ENCODE measurements at regions of chr7 and their contacts with region 1.

Region 1: GRCh38 chr7:104137971-104138370 is 69.8 kb downstream of the ORC5 start:
- DNase-seq: no peak
- H3K4me3 Mint-ChIP-seq: no peak overlapping the region
- H3K27ac Mint-ChIP-seq: no peak overlapping the region
- H3K4me1 Mint-ChIP-seq: peaks cover 9% of the 10 kb centered on the region
- H3K27me3 Mint-ChIP-seq: no peaks in the 10 kb centered on the region

Region 2: DNA sequence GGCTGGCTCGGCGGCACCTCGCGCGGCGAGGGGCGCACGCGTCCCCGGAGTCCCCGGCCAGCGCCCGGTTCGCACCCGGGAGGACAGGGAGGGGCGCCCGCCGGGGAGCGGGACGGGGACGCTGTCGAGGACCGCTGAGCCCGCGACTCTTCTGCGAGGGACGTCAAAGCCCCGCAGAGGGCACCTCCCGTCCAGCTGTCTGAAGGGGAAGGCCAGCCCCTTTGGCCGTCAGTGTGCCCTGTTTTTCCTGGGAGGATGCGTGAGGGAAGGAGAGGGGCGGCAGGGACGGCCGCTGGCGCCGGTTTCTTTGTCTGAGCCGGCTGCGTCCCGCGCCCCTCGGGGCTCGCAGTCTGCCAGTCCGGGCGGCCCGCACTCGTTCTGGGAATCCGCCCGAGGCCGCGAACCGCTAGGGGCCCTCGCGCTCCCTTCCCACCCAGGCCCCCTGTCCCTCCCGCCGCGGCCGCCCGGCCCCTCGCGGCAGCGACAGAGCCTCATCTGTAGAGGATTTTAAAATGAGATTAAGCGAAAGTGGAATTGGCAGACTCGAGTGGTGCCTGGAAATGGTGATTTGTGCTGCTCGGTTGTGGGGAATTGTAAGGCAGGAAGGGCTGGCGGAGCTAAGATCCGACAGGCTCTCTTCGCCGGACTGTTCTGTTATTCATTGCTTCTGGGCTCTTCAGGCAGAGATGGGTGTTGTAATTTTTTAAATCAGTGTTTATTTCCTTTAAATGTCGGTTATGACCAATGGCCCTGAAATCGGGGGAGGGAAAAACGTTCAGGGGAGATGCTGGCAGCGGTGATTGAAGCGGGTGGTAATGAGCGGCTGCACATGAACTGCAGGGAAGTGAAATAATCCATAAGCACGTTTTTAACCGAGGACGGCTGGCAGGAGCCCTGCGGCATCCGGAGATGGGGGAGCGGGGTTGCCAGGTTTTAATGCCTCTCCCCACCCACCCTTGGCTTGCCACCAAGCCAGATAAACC is 147.9 kb before region 1 on chr7:
- CTCF ChIA-PET with region 1: no interaction called
- POLR2A ChIA-PET with region 1: no interaction called
- intact Hi-C with region 1: loop called (anchors 10 kb)
- DNase-seq: peak; percentile 18
- H3K4me3 Mint-ChIP-seq: peak overlapping the region; percentile 47
- H3K27ac Mint-ChIP-seq: no peak overlapping the region
- H3K4me1 Mint-ChIP-seq: peaks cover 12% of the 10 kb centered on the region
- H3K27me3 Mint-ChIP-seq: peaks cover 39% of the 10 kb centered on the region

Region 3: GRCh38 chr7:104106108-104106905 is 31.7 kb before region 1 on chr7:
- CTCF ChIA-PET with region 1: no interaction called
- POLR2A ChIA-PET with region 1: no interaction called
- intact Hi-C with region 1: no loop called
- DNase-seq: no peak
- H3K4me3 Mint-ChIP-seq: no peak overlapping the region
- H3K27ac Mint-ChIP-seq: no peak overlapping the region
- H3K4me1 Mint-ChIP-seq: no peaks in the 10 kb centered on the region
- H3K27me3 Mint-ChIP-seq: peaks cover 3% of the 10 kb centered on the region

Region 4: DNA sequence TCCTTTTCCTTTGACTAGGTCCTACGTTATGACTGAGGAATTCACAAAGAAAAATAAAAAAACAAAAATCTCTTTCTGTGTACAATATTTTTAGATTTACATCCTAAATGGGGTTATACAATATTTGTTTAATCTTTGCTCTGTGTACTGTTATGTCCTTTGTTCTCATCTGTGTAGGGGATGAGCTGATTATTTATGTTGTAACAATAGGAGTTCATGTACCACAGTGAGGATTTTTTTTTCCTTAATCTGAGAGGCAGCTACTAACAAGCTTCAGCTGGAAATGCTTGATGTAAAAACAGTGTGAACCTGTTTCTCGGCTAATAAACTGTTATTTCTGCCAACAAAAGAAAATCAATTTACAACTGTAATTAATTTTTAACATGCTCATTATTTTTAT is 11.9 kb after region 1 on chr7:
- CTCF ChIA-PET with region 1: no interaction called
- POLR2A ChIA-PET with region 1: no interaction called
- intact Hi-C with region 1: no loop called
- DNase-seq: no peak
- H3K4me3 Mint-ChIP-seq: no peak overlapping the region
- H3K27ac Mint-ChIP-seq: no peak overlapping the region
- H3K4me1 Mint-ChIP-seq: no peaks in the 10 kb centered on the region
- H3K27me3 Mint-ChIP-seq: no peaks in the 10 kb centered on the region

Region 5: DNA sequence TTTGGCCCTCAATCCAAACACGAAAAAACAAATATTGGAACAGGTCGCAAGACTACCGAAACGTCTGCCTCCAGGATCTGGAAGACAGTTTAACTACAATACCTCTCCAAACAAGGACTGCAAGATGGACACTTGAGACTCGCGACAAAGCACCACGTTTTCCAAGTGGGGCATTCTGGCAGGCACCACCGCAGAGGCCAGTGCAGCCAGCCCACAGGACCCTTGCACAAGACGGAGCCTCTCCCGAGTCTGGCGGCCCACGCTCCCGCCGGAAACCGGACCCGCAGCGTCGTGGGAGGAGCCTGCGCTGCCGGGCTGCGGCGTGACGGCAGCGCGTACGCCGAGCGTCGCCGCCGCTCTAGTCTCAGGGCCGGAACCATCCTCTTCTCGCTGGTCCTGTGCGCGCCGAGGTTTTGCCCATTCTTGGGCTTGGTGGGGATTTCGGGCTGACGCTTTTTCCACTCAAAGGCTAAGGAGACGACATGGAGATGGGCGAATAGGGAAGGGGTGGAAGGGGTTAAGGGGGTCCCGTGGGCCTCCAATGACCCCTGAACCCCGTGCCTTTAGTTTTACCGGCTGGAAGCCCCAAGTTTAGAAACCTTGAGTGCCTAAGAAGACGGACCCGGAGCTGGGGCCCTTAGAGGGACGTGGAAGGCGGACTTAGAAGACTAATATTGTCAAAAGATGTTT is 69.9 kb after region 1 on chr7 and contains the start of gene ORC5:
- CTCF ChIA-PET with region 1: no interaction called
- POLR2A ChIA-PET with region 1: no interaction called
- intact Hi-C with region 1: loop called (anchors 5 kb)
- DNase-seq: peak; percentile 86
- H3K4me3 Mint-ChIP-seq: peak within 1 kb of the TSS; percentile 96
- H3K27ac Mint-ChIP-seq: peak within 1 kb of the TSS; percentile 92
- H3K4me1 Mint-ChIP-seq: peaks cover 38% of the 10 kb centered on the region
- H3K27me3 Mint-ChIP-seq: peaks cover 16% of the 10 kb centered on the region
- total RNA-seq, gene ORC5: 18.2 to 19.4 TPM